MCF 10A (cell line): ENCODE measurements at regions of chr3 and their contacts with region 1.

Region 1: DNA sequence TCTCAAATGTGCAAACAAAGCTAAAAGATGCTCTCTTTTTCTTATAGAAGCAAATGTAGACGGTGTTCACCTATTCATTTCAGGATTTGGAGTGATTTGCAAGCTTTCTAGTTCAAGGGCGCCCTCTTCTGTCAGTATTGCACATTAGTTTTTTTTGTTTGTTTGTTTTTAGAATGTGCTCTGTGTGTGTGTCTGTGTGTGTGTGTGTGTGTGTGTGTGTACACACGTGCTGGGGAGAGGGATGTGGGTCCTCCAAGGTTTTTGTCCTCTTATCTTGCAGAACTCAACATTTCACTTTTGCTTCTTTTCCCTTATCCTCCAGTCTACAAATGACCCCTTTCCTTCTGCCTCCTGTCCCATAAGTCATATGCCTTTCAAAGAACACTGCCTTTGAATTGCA is 23.5 kb downstream of the DNAH1 start:
- DNase-seq: peak; percentile 83
- H3K4me3 Mint-ChIP-seq: no peak overlapping the region
- H3K27ac Mint-ChIP-seq: no peak overlapping the region
- H3K4me1 Mint-ChIP-seq: peaks cover 6% of the 10 kb centered on the region
- H3K27me3 Mint-ChIP-seq: peaks cover 7% of the 10 kb centered on the region
- CTCF ChIP-seq: peak; percentile 62

Region 2: DNA sequence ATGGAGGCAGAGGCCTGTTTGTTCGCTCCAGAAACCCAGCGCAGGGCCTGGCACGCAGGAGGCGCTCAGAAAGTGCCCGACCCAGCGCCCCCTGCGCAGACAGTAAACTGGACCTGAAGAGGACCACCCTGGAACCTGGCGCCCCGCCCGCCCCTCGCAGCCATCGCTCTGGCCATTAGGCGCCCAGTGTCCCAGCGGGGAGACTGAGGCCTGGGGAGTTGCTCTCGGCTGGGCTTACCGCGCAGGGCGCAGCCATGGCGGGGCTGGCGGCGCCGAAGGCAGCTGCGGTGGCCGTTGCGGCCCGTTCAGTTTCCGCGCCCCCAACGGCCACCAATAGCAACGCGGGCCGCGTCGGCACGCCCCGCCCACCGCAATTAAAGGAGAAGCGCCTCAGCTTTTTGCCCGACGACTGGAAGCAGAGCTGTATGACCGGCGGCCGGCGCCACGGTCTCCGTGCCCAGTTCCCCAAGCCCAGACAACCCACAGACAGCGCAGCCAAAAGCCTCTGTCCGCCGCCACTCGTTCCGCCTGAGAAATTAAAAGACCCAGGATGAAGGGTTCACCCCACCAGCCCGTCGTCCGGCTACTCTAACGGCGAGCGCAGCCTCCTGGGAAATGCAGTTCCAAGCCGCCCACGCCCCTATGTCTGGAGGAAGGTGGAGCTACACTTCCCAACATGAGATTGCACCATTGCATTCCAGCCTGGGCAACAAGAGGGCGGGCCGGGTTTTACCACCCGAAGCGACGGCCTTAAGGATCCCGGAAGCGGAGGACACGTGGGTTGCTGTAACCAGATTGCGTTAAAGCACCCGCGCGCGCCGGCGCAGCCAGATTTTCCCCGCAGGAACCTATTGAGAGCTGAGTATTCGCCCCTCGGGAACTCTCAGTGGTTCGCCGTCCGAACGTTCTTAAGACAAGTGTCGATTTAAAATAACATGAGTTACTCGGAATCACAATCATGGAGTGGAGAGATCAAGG is 185.2 kb before region 1 on chr3 and contains the start of gene POC1A:
- CTCF ChIA-PET with region 1: interaction called, 5 read pairs
- POLR2A ChIA-PET with region 1: no interaction called
- intact Hi-C with region 1: loop called (anchors 5 kb)
- DNase-seq: peak; percentile 99
- H3K4me3 Mint-ChIP-seq: peak within 1 kb of the TSS; percentile 93
- H3K27ac Mint-ChIP-seq: peak within 1 kb of the TSS; percentile 96
- H3K4me1 Mint-ChIP-seq: peaks cover 10% of the 10 kb centered on the region
- H3K27me3 Mint-ChIP-seq: no peaks in the 10 kb centered on the region
- CTCF ChIP-seq: no peak
- total RNA-seq, gene POC1A: 7.5 and 9.8 TPM in 2 replicates

Region 3: GRCh38 chr3:52220380-52221026 is 119.1 kb before region 1 on chr3:
- CTCF ChIA-PET with region 1: interaction called, 82 read pairs
- POLR2A ChIA-PET with region 1: interaction called, 6 read pairs
- intact Hi-C with region 1: no loop called
- DNase-seq: peak; percentile 82
- H3K4me3 Mint-ChIP-seq: no peak overlapping the region
- H3K27ac Mint-ChIP-seq: no peak overlapping the region
- H3K4me1 Mint-ChIP-seq: peaks cover 15% of the 10 kb centered on the region
- H3K27me3 Mint-ChIP-seq: no peaks in the 10 kb centered on the region
- CTCF ChIP-seq: peak; percentile 81

Region 4: GRCh38 chr3:52238761-52239701 is 100.6 kb before region 1 on chr3 and contains the start of gene TWF2:
- CTCF ChIA-PET with region 1: interaction called, 17 read pairs
- POLR2A ChIA-PET with region 1: interaction called, 14 read pairs
- intact Hi-C with region 1: no loop called
- DNase-seq: peak; percentile 70
- H3K4me3 Mint-ChIP-seq: peak within 1 kb of the TSS; percentile 86
- H3K27ac Mint-ChIP-seq: peak within 1 kb of the TSS; percentile 87
- H3K4me1 Mint-ChIP-seq: peaks cover 31% of the 10 kb centered on the region
- H3K27me3 Mint-ChIP-seq: no peaks in the 10 kb centered on the region
- CTCF ChIP-seq: no peak
- total RNA-seq, gene TWF2: 30.5 and 47.0 TPM in 2 replicates

Region 5: GRCh38 chr3:52291508-52292181 is 48.0 kb before region 1 on chr3:
- CTCF ChIA-PET with region 1: interaction called, 14 read pairs
- POLR2A ChIA-PET with region 1: interaction called, 8 read pairs
- intact Hi-C with region 1: loop called (anchors 5 kb)
- DNase-seq: no peak
- H3K4me3 Mint-ChIP-seq: no peak overlapping the region
- H3K27ac Mint-ChIP-seq: no peak overlapping the region
- H3K4me1 Mint-ChIP-seq: peaks cover 4% of the 10 kb centered on the region
- H3K27me3 Mint-ChIP-seq: no peaks in the 10 kb centered on the region
- CTCF ChIP-seq: peak; percentile 34

Region 6: DNA sequence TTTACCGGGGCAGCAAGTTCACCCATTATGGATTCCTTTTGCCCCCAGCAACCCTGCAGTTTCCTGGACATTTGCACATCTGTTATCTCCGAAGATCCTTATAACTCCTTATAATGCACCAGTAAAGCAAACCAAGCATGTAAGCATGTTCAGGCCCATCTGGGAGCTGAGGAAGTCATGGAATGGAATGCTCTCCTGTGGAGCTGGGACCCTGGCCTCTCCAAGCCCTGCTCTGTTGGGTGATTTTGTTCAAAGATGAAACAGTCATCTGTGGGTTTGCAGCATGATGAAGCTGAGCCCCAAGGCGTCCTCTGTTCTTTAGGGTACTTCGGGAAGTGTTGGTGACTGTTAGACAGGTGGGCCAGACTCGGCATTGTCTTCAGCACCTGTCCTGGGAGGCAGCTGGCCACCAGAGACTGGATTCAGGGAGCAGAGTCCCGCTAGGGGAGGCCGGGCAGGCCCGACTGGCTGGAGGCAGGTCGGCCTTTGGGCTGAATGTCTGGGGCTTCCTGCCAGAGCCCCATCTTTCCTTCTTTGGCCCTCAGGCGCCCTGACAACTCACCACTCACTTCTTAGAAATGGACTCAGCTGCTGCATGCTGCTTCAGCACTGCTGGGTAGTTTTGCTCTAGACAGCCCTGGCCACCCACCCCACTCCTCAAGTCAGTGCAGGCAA is 19.6 kb before region 1 on chr3:
- CTCF ChIA-PET with region 1: interaction called, 11 read pairs
- POLR2A ChIA-PET with region 1: interaction called, 4 read pairs
- intact Hi-C with region 1: no loop called
- DNase-seq: no peak
- H3K4me3 Mint-ChIP-seq: no peak overlapping the region
- H3K27ac Mint-ChIP-seq: no peak overlapping the region
- H3K4me1 Mint-ChIP-seq: no peaks in the 10 kb centered on the region
- H3K27me3 Mint-ChIP-seq: no peaks in the 10 kb centered on the region
- CTCF ChIP-seq: no peak

Region 7: GRCh38 chr3:52495777-52496602 is 156.4 kb after region 1 on chr3:
- CTCF ChIA-PET with region 1: no interaction called
- POLR2A ChIA-PET with region 1: no interaction called
- intact Hi-C with region 1: no loop called
- DNase-seq: peak; percentile 53
- H3K4me3 Mint-ChIP-seq: no peak overlapping the region
- H3K27ac Mint-ChIP-seq: no peak overlapping the region
- H3K4me1 Mint-ChIP-seq: no peaks in the 10 kb centered on the region
- H3K27me3 Mint-ChIP-seq: no peaks in the 10 kb centered on the region
- CTCF ChIP-seq: no peak